ENCODE measurements at regions of chr3 and their contacts with region 1.

Region 1: DNA sequence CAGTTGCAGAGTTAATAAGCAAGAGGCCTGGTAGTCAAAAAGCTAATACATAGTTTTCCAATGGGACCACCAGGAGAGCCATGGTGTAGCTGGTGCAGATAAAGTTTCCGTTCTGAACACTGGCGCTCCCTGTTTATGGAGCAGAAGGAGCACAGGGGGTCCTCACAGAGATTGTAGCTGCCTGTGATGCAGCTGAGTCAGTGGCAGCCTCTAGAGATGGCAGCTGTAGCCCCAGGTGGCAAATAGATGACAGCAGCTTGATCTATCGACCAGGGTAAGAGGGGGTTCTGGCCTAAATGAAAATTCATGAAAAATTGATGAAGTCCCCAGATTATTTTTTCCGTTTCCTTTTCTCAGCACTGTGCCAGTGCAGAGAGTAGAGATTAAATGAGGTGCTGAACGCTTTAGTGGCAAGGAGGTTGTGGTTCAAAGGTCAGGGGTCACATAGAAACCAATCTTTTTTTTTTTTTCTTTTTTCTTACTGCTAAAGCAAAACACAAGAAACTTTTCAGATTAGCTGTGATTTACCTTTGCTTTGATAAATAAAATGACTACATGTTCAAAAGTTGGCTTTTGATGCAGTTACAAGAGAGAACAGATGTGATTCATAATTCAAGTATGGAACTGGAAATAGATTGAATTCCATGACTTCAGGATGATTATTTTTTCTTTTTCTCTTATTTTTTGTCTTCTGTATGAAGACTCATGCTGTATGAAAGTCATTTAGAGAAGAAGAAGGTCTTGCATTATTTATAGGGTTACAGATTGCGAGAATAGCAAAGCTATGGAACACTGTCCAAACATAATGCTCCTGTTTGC is 63.3 kb downstream of the ROBO2 start:
- DNase-seq: no peak
- H3K4me3 ChIP-seq: no peak overlapping the region
- H3K27ac ChIP-seq: no peak overlapping the region
- H3K4me1 ChIP-seq: no peaks in the 10 kb centered on the region
- H3K27me3 ChIP-seq: no peaks in the 10 kb centered on the region
- CTCF ChIP-seq: no peak
- POLR2A ChIP-seq: no peak

Region 2: GRCh38 chr3:77142578-77142977 is 39.4 kb after region 1 on chr3:
- intact Hi-C with region 1: loop called (anchors 2 kb)
- DNase-seq: no peak
- H3K4me3 ChIP-seq: no peak overlapping the region
- H3K27ac ChIP-seq: no peak overlapping the region
- H3K4me1 ChIP-seq: no peaks in the 10 kb centered on the region
- H3K27me3 ChIP-seq: no peaks in the 10 kb centered on the region
- CTCF ChIP-seq: no peak
- POLR2A ChIP-seq: no peak

Region 3: GRCh38 chr3:78129707-78130106 is 1026.5 kb after region 1 on chr3:
- intact Hi-C with region 1: loop called (anchors 5 kb)
- DNase-seq: no peak
- H3K4me3 ChIP-seq: no peak overlapping the region
- H3K27ac ChIP-seq: no peak overlapping the region
- H3K4me1 ChIP-seq: no peaks in the 10 kb centered on the region
- H3K27me3 ChIP-seq: no peaks in the 10 kb centered on the region
- CTCF ChIP-seq: no peak
- POLR2A ChIP-seq: no peak